Activated naive CD4-positive, alpha-beta T cell treated with anti-CD3 and anti-CD28 coated beads for 36 hours (primary cell): ENCODE measurements at regions of chr9 and their contacts with region 1.

Region 1: GRCh38 chr9:132240753-132241493 is 79.1 kb downstream of the NTNG2 start:
- DNase-seq: peak; percentile 98
- H3K4me3 Mint-ChIP-seq: peak overlapping the region; percentile 92
- H3K27ac Mint-ChIP-seq: no peak overlapping the region
- H3K4me1 Mint-ChIP-seq: peaks cover 6% of the 10 kb centered on the region
- H3K27me3 Mint-ChIP-seq: peaks cover 2% of the 10 kb centered on the region

Region 2: DNA sequence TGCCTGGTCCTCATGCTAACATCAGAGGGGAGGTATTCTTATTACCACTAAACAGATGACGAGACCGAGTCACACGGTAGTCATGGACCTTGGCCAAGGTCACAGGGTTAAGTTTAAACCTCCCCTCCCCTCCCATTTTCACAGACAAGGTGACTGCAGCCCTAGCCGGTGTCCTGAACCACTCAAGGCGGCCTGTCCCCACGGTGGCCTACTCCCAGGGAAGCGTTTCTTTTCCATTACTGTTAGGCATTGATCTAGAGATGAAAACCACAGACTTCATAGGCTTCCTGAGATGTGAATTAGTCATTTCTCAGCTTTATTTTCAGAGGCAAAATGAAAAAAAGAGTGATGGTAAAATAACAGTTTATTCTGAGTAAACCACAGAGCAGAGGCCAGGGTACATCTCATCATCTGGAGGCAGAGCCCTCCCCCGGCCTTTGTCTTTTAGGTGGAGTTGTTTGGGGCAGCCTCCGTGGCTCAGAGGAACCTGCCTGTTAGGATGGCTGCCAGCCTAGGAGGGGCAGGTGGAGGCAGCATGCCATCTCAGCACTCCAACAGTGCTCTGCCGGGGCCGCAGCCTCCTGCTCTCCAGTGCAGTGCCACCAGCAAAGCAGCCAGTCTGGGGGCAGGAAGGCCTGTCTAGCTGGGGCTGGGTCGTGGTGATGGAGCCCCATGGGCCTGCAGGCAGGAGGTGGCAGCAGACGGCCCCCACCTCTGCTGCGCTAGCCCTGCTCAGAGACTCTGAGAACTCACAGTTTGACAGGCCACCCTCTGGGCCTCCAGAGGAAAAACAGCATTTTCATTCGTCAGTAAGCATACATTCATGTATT is 572.3 kb before region 1 on chr9:
- CTCF ChIA-PET with region 1: no interaction called
- intact Hi-C with region 1: loop called (anchors 5 kb)
- DNase-seq: peak; percentile 85
- H3K4me3 Mint-ChIP-seq: peak overlapping the region; percentile 60
- H3K27ac Mint-ChIP-seq: peak overlapping the region; percentile 100
- H3K4me1 Mint-ChIP-seq: peaks cover 79% of the 10 kb centered on the region
- H3K27me3 Mint-ChIP-seq: no peaks in the 10 kb centered on the region

Region 3: GRCh38 chr9:131762356-131762932 is 478.5 kb before region 1 on chr9:
- CTCF ChIA-PET with region 1: interaction called, 20 read pairs
- intact Hi-C with region 1: loop called (anchors 1 kb)
- DNase-seq: peak; percentile 74
- H3K4me3 Mint-ChIP-seq: no peak overlapping the region
- H3K27ac Mint-ChIP-seq: no peak overlapping the region
- H3K4me1 Mint-ChIP-seq: peaks cover 9% of the 10 kb centered on the region
- H3K27me3 Mint-ChIP-seq: no peaks in the 10 kb centered on the region

Region 4: GRCh38 chr9:132169672-132170392 is 71.1 kb before region 1 on chr9:
- CTCF ChIA-PET with region 1: interaction called, 60 read pairs
- intact Hi-C with region 1: loop called (anchors 1 kb)
- DNase-seq: peak; percentile 59
- H3K4me3 Mint-ChIP-seq: no peak overlapping the region
- H3K27ac Mint-ChIP-seq: no peak overlapping the region
- H3K4me1 Mint-ChIP-seq: no peaks in the 10 kb centered on the region
- H3K27me3 Mint-ChIP-seq: peaks cover 44% of the 10 kb centered on the region

Region 5: GRCh38 chr9:132406554-132407122 is 165.7 kb after region 1 on chr9 and contains the start of gene TTF1:
- CTCF ChIA-PET with region 1: no interaction called
- intact Hi-C with region 1: loop called (anchors 1 kb)
- DNase-seq: peak; percentile 96
- H3K4me3 Mint-ChIP-seq: peak within 1 kb of the TSS; percentile 95
- H3K27ac Mint-ChIP-seq: peak within 1 kb of the TSS; percentile 90
- H3K4me1 Mint-ChIP-seq: peaks cover 53% of the 10 kb centered on the region
- H3K27me3 Mint-ChIP-seq: peaks cover 10% of the 10 kb centered on the region
- total RNA-seq, gene TTF1: 27.1 to 29.9 TPM